ENCODE measurements at regions of chr17 and their contacts with region 1.

Region 1: GRCh38 chr17:68777243-68777855 is 176.2 kb upstream of the FAM20A start:
- DNase-seq: peak; percentile 44 to 51
- ATAC-seq: peak; percentile 67 to 80; a peak in 5 of 6 replicates
- H3K4me3 ChIP-seq: no peak overlapping the region
- H3K27ac ChIP-seq: no peak overlapping the region
- H3K4me1 ChIP-seq: peaks cover 7% of the 10 kb centered on the region
- CTCF ChIP-seq: peak; percentile 92
- EP300 ChIP-seq: no peak
- POLR2A ChIP-seq: no peak
- RAD21 ChIP-seq: peak; percentile 88 to 94

Region 2: DNA sequence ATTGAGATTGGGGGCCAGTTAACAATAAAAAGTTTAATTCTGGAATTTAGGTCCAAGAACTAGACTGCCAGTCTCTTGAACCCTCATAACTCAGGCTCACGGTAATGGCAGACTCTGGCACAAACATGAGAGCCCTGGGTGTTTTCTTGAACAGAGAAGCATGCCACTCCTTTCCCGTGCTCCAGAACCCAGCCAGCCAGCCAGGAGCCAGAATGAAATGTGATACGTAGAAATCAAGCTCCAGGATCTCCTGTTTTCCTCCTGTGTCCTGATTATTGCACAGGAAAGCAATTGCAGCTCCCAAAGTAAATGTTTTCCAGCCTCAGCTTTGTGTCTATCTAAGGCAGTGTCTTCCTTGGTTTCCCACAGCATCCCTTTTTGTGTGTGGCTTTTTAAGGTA is 1105.9 kb before region 1 on chr17:
- CTCF ChIA-PET with region 1: no interaction called
- POLR2A ChIA-PET with region 1: no interaction called
- DNase-seq: no peak
- ATAC-seq: no peak
- H3K4me3 ChIP-seq: no peak overlapping the region
- H3K27ac ChIP-seq: no peak overlapping the region
- H3K4me1 ChIP-seq: no peaks in the 10 kb centered on the region
- CTCF ChIP-seq: no peak
- EP300 ChIP-seq: no peak
- POLR2A ChIP-seq: no peak
- RAD21 ChIP-seq: no peak

Region 3: DNA sequence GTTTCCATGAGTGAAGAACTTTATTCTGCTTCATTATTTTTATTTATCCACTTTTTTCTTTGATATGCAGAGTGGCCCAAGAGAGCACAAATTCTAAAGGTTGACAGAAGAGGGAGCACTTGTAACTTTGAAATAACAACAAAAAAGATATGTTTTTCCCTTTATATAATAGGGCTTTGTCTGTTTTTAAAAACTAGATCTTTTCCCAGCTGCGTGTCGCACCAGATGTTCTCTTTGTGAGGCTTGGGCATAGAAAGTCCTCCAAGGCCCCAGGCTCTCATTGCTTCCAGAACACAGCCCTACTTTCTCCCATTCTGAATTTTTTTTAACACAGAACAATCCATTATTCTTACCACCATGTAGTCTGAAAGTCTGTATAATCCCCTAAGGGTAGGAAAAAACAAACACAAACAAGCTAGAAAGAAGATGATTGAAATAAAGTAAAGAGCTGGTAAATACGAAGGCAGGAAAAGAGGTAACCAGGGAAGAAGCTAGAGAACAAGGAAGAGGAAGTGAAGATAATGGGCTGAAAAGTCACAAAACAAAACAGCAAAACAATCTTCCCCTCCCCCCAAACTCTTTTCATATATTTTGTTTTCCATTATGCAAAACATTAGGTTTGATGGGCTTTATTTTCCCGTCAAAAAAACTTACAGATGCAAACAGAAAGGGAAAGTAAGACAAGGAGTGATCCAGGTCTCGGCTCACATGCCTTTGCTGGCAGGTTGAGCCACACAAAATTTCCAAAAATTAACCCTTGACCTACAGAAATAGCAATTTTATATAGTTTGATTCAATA is 17.5 kb after region 1 on chr17:
- CTCF ChIA-PET with region 1: interaction called, 128 read pairs
- POLR2A ChIA-PET with region 1: no interaction called
- DNase-seq: no peak
- ATAC-seq: peak in 1 of 2 experiments; percentile 28; a peak in 2 of 6 replicates
- H3K4me3 ChIP-seq: no peak overlapping the region
- H3K27ac ChIP-seq: peak overlapping the region; percentile 45 to 79; a peak in 5 of 6 replicates
- H3K4me1 ChIP-seq: peaks cover 41% of the 10 kb centered on the region
- CTCF ChIP-seq: peak; percentile 15; the same call in 1 of the 3 replicates
- EP300 ChIP-seq: no peak
- POLR2A ChIP-seq: no peak
- RAD21 ChIP-seq: peak in 1 of 2 experiments; percentile 29; a peak in 1 of 5 replicates

Region 4: DNA sequence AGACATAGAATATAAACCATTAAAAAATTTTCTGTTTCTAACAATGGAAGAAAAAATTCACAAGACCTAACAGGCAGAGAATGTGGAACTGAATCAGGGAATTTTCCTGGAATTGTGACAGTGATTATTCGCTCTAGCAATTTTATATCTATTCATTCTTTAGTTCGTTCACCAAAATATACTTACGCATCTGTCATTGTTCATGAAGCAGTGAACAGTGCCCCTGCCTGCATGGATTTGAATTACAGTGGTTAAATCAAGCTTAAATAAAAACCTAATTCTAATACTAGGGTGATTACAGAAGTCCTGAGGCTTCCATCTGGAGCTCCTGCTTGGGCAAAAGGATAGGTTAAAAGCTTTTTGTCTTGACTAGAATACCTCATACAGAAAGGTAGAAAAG is 129.3 kb after region 1 on chr17:
- CTCF ChIA-PET with region 1: interaction called, 19 read pairs
- POLR2A ChIA-PET with region 1: no interaction called
- DNase-seq: peak in 1 of 2 experiments; percentile 36
- ATAC-seq: peak in 1 of 2 experiments; percentile 62; a peak in 3 of 6 replicates
- H3K4me3 ChIP-seq: no peak overlapping the region
- H3K27ac ChIP-seq: no peak overlapping the region
- H3K4me1 ChIP-seq: peaks cover 5% of the 10 kb centered on the region; the same call in 1 of the 3 replicates
- CTCF ChIP-seq: peak; percentile 39; the same call in 2 of the 3 replicates
- EP300 ChIP-seq: no peak
- POLR2A ChIP-seq: no peak
- RAD21 ChIP-seq: peak; percentile 26 to 37; a peak in 3 of 5 replicates

Region 5: GRCh38 chr17:68972119-68972704 is 194.9 kb after region 1 on chr17:
- CTCF ChIA-PET with region 1: interaction called, 43 read pairs
- POLR2A ChIA-PET with region 1: no interaction called
- DNase-seq: peak; percentile 20 to 49
- ATAC-seq: peak; percentile 55 to 59; a peak in 4 of 6 replicates
- H3K4me3 ChIP-seq: no peak overlapping the region
- H3K27ac ChIP-seq: no peak overlapping the region
- H3K4me1 ChIP-seq: no peaks in the 10 kb centered on the region
- CTCF ChIP-seq: peak; percentile 83
- EP300 ChIP-seq: no peak
- POLR2A ChIP-seq: no peak
- RAD21 ChIP-seq: peak; percentile 65 to 82

Measured in A549 (cell line).